Transverse colon (tissue), 4 donors: ENCODE measurements at regions of chr10 and their contacts with region 1.

Region 1: DNA sequence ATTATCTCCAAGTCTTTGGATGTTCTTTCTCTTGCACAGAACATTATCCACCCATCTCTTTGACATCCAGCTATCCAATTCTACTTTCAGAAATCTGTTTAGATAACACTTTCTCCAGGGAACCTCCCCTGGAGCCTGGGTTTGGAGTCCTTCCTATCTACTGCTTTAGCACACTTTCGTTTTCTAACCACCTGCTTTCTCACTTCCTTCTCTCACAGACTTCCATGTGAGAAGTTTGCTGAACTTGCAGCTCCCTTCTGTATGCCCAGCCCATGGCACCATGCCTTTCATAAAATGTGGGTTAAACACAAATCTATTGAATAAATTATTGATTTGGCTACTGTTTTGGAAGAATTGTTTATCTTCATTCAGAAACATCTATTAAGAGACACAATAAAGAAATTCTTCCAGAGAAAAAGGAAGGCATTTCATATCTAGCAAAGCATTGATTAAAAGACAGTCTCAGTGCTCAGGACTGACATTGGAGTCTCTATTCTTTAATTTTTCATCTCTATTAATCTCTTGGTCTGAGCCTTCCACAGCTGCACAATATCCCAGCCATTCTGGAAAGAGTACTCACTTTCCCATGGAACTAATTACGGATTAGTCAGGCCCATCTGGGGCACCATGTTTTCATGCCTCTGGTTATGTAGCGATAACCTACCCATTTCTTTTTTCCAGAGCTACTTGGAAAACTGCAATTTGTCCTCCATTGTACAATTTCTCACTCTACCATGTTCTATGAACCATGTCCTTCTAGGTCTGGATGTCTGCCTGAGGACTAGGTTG is 1077.3 kb downstream of the SORCS3 start:
- DNase-seq: no peak
- H3K4me3 ChIP-seq: no peak overlapping the region
- H3K27ac ChIP-seq: no peak overlapping the region
- H3K4me1 ChIP-seq: no peaks in the 10 kb centered on the region
- H3K27me3 ChIP-seq: no peaks in the 10 kb centered on the region
- CTCF ChIP-seq: no peak
- EP300 ChIP-seq: no peak
- POLR2A ChIP-seq: no peak

Region 2: DNA sequence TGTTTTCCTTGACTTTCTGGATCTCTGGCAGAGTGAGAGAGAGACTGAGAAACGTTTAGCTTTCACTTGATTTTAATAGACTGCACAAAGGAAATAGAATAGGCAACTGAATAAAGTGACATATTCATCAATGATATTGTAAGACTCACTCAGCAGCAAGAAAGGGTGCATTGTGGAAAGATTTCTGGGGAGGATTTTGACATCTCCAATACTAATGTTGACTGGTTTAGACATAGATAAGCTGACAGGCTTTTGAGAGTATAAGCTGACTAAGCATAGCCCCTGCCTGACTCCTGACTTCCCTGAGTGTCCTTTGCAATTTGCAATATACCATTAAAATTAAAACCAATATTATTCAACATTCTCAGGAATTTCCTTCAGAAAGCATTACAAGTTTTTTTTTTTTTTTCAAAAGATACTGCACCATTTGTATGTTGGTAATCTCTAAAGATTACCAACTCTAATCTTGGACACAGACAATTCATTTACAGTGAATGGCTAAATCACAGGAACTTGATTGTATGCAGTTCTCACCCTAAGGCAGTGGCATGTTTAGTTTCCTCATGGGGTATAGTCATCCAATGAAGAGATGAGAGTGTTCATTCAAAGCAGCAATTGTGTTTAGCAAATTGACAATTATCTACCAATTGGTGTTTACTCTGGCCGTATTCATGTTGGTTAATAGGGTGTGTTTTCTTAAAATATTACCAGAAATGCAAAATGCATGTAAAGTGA is 751.7 kb before region 1 on chr10:
- in situ Hi-C with region 1: no loop called
- intact Hi-C with region 1: loop called (anchors 10 kb)
- DNase-seq: no peak
- H3K4me3 ChIP-seq: no peak overlapping the region
- H3K27ac ChIP-seq: no peak overlapping the region
- H3K4me1 ChIP-seq: no peaks in the 10 kb centered on the region
- H3K27me3 ChIP-seq: no peaks in the 10 kb centered on the region
- CTCF ChIP-seq: no peak
- EP300 ChIP-seq: no peak
- POLR2A ChIP-seq: no peak

Region 3: GRCh38 chr10:105545101-105545500 is 173.3 kb before region 1 on chr10:
- in situ Hi-C with region 1: no loop called
- intact Hi-C with region 1: no loop called
- DNase-seq: no peak
- H3K4me3 ChIP-seq: no peak overlapping the region
- H3K27ac ChIP-seq: no peak overlapping the region
- H3K4me1 ChIP-seq: no peaks in the 10 kb centered on the region
- H3K27me3 ChIP-seq: no peaks in the 10 kb centered on the region
- CTCF ChIP-seq: no peak
- EP300 ChIP-seq: no peak
- POLR2A ChIP-seq: no peak

Region 4: GRCh38 chr10:105658696-105659095 is 59.7 kb before region 1 on chr10:
- in situ Hi-C with region 1: no loop called
- intact Hi-C with region 1: no loop called
- DNase-seq: no peak
- H3K4me3 ChIP-seq: no peak overlapping the region
- H3K27ac ChIP-seq: no peak overlapping the region
- H3K4me1 ChIP-seq: no peaks in the 10 kb centered on the region
- H3K27me3 ChIP-seq: no peaks in the 10 kb centered on the region
- CTCF ChIP-seq: no peak
- EP300 ChIP-seq: no peak
- POLR2A ChIP-seq: no peak

Region 5: DNA sequence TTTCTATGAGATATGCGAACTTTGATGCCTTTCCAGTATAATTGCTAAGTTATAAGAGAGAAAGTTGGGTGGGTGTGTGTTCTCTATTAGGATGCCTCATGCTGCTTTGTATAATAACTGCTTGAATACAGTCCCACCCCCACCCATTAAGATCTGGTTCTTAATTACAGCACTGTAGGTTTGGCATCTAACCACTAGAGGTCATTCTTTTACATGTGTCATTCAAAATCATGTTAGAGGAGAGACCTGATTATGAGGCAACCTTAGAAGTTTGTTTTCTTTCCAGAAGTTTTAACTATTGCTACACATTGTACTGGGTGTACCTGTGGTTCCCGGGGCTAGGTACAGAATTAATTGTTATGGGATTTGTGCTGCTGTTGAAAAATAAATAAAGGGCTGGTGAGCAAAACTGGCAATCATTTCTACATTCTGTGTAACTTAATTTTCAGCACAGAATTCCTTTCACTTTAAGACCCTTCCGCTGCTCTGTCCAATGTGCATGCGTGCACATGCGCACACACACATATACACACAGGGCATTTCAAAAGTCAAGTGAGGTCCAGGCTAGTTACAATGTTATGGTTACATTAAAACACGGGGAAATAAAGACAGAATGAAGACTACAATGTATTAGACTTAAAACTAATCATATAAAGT is 79.0 kb after region 1 on chr10:
- in situ Hi-C with region 1: no loop called
- intact Hi-C with region 1: no loop called
- DNase-seq: no peak
- H3K4me3 ChIP-seq: no peak overlapping the region
- H3K27ac ChIP-seq: no peak overlapping the region
- H3K4me1 ChIP-seq: no peaks in the 10 kb centered on the region
- H3K27me3 ChIP-seq: no peaks in the 10 kb centered on the region
- CTCF ChIP-seq: peak in 3 of 5 experiments; percentile 20 to 45 (median 41)
- EP300 ChIP-seq: no peak
- POLR2A ChIP-seq: no peak